Dendritic cell treated with granulocyte-macrophage colony-stimulating factor and Interleukin-4, amounts not matched to agents 40 ng/mL and 50 ng/mL, for 4 days (primary cell): ENCODE measurements at regions of chr17 and their contacts with region 1.

Region 1: GRCh38 chr17:35088881-35089585 is 25.5 kb upstream of the RFFL start:
- H3K4me3 Mint-ChIP-seq: peak overlapping the region; percentile 86
- H3K27ac Mint-ChIP-seq: peak overlapping the region; percentile 95
- H3K4me1 Mint-ChIP-seq: peaks cover 35% of the 10 kb centered on the region
- H3K27me3 Mint-ChIP-seq: no peaks in the 10 kb centered on the region

Region 2: DNA sequence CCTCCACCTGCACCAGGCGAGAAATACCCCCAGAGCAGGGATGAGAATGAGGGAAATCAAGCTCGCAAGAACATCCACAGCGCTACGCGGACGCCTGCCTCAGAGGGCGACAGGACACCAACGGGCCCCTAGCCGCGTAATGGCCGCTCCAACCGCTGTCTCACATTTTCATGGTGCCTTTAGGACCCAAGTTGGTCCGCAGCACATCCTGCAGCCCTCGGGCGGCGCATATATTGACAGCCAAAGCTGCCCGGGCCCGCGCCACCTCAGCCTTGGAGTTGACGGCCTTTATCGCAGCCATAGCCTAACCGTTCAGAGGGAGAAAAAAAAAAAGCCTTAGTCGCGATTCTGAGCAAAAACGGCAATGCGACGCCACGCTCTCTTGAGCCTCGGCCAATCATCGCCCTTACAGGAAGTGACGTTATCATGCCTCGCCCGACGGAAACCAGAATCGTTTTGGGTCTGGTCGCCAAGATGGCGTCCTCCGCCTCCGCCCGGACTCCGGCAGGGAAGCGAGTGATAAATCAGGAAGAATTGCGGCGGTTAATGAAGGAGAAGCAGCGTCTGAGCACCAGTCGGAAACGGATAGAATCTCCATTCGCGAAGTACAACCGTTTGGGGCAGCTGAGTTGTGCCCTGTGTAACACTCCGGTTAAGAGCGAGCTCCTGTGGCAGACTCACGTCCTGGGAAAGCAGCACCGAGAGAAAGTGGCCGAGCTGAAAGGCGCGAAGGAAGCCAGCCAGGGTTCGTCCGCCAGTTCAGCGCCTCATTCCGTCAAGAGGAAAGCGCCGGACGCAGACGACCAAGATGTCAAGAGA is 127.7 kb before region 1 on chr17 and contains the starts of genes CCT6B and ZNF830:
- intact Hi-C with region 1: loop called (anchors 1 kb)
- H3K4me3 Mint-ChIP-seq: peak within 1 kb of the TSS; percentile 94
- H3K27ac Mint-ChIP-seq: peak within 1 kb of the TSS; percentile 97
- H3K4me1 Mint-ChIP-seq: peaks cover 21% of the 10 kb centered on the region
- H3K27me3 Mint-ChIP-seq: peaks cover 5% of the 10 kb centered on the region

Region 3: GRCh38 chr17:35051183-35051578 is 37.9 kb before region 1 on chr17:
- intact Hi-C with region 1: loop called (anchors 5 kb)
- H3K4me3 Mint-ChIP-seq: peak overlapping the region; percentile 60
- H3K27ac Mint-ChIP-seq: peak overlapping the region; percentile 76
- H3K4me1 Mint-ChIP-seq: peaks cover 72% of the 10 kb centered on the region
- H3K27me3 Mint-ChIP-seq: no peaks in the 10 kb centered on the region

Region 4: DNA sequence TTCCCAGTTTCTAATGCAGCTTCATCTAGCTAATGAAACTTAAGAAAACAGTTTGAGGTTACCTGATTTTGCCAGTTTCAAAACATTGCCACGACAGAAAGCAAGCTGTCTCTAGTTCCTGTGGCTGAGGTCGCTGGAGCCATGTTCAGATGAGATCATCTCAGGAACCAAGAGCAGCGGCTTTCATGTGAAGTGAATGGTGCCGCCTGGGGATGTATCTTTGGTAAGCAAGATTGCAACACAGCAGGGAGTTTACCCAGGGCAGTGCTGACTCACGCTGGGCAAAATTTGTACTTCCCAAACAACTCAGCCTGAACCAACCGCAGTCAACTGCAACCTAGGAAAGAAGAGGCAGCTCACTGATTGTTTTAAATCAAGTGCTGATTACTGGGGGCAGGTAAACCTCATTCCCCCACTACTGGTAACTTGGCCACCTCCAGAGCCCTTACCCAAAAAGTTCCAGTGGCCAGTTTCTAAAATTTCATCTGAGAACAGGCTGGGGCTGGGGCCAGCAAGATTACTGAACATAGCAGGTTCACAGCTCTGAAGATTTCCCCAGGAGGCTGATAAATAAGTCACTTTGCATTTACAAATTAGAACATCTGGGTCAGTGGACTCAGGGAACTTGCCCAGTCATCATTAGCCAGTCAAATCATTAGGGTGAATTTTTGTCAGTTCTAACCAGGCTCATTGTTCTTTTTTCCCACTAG is 25.4 kb before region 1 on chr17 and contains the start of gene RFFL:
- intact Hi-C with region 1: loop called (anchors 1 kb)
- H3K4me3 Mint-ChIP-seq: peak within 1 kb of the TSS; percentile 67
- H3K27ac Mint-ChIP-seq: peak within 1 kb of the TSS; percentile 90
- H3K4me1 Mint-ChIP-seq: peaks cover 55% of the 10 kb centered on the region
- H3K27me3 Mint-ChIP-seq: no peaks in the 10 kb centered on the region

Region 5: DNA sequence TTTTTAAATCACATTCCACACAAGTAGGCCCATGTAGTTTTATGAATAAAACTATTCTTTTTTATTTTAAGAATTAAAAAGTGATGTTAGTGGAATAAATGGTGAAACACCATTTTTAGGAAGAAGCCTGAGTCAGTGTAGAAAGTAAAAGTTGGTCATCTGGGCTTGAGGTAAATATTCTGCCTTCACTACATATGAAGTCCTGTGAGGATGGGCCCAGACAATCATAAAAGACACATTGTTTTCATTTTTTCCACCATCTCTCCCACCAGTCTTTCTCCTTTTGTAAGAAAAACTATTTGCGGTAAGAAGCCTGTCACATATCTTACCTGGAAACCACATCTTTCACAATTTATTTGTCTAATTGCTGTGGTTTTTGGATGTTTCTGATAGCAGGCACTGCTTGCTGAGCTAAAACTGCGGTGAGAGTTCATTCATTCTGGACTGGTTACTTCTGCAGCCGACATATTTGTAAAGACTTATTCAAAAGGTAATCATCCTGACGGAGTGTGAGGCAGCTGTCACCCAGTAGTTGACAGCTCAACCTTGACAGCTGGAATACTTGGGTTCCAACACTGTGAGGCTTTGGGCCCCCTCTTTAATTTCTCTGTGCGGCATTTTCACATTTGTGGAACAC is 14.9 kb before region 1 on chr17:
- intact Hi-C with region 1: no loop called
- H3K4me3 Mint-ChIP-seq: no peak overlapping the region
- H3K27ac Mint-ChIP-seq: no peak overlapping the region
- H3K4me1 Mint-ChIP-seq: peaks cover 51% of the 10 kb centered on the region
- H3K27me3 Mint-ChIP-seq: no peaks in the 10 kb centered on the region